ENCODE measurements at regions of chr7 and their contacts with region 1.

Region 1: DNA sequence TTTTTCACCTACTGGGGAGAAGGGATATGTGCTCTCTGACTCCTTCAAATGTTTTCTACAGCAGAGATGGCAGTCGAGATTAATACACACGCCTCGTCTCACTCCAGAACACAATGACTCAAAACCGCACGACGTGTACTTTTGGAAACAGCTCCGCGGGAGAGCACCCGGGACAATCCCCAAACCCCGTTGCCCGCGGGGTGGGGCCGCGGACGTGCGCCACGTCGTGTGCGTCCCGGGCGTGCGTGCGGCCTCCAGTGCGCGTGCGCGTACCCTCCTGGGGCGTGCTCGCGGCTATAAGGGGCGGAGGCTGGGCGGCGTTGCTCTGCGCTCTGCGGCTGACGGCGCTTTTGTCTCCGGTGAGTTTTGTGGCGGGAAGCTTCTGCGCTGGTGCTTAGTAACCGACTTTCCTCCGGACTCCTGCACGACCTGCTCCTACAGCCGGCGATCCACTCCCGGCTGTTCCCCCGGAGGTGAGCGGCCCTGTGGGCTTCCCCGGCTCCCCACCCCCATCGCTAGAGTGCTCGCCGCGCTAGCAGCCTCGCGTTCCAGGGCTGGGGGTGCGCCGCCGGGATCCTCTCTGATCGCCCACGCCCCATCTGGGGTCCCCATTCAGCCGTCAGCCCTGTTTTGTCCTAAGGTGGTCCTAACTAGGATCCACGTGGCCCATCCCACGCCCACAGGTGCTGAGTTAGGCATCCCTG is at the start of gene HILPDA:
- DNase-seq: peak; percentile 90 to 98 (median 93)
- ATAC-seq: peak; percentile 95
- H3K4me3 ChIP-seq: peak within 1 kb of the TSS; percentile 85
- H3K4me3 Mint-ChIP-seq: peak within 1 kb of the TSS; percentile 81 to 96 (median 92)
- H3K27ac ChIP-seq: peak within 1 kb of the TSS; percentile 83
- H3K27ac Mint-ChIP-seq: peak within 1 kb of the TSS; percentile 72 to 98 (median 89)
- H3K4me1 ChIP-seq: peaks cover 12 to 22% of the 10 kb centered on the region in 2 donors
- H3K4me1 Mint-ChIP-seq: peaks cover 13 to 65% (median 22%) of the 10 kb centered on the region in 7 donors
- H3K27me3 ChIP-seq: no peaks in the 10 kb centered on the region
- H3K27me3 Mint-ChIP-seq: peaks cover 0 to 8% (median 0%) of the 10 kb centered on the region in 5 donors
- total RNA-seq, gene HILPDA: 2.4 to 39.5 (median 4.4) TPM

Region 2: DNA sequence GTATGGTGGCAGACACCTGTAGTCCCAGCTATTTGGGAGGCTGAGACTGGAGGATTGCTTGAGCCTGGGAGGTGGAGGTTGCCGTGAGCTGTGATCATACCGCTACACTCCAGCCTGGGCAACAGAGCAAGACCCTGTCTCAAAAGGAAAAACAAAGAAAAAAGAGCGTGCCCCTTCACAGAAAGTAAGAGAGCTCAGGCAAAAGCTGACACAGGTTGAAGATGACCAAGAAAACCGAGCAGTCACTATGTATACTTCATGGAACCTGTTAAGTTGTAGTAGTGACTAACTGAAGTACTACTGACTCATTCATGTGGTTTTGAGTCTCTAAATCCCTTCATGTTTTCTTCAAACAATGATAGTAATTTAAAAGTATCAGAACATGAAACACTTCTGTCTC is 93.0 kb before region 1 on chr7:
- CTCF ChIA-PET with region 1: no interaction called
- POLR2A ChIA-PET with region 1: no interaction called
- intact Hi-C with region 1: no loop called
- DNase-seq: no peak
- ATAC-seq: no peak
- H3K4me3 ChIP-seq: no peak overlapping the region
- H3K4me3 Mint-ChIP-seq: peak overlapping the region; percentile 34 to 96 (median 87)
- H3K27ac ChIP-seq: no peak overlapping the region
- H3K27ac Mint-ChIP-seq: peak overlapping the region in 3 of 9 donors; percentile 29 to 76 (median 41)
- H3K4me1 ChIP-seq: peaks cover 0 to 5% of the 10 kb centered on the region in 2 donors
- H3K4me1 Mint-ChIP-seq: peaks cover 11 to 21% (median 15%) of the 10 kb centered on the region in 7 donors
- H3K27me3 ChIP-seq: no peaks in the 10 kb centered on the region
- H3K27me3 Mint-ChIP-seq: peaks cover 43 to 89% (median 48%) of the 10 kb centered on the region in 5 donors

Region 3: DNA sequence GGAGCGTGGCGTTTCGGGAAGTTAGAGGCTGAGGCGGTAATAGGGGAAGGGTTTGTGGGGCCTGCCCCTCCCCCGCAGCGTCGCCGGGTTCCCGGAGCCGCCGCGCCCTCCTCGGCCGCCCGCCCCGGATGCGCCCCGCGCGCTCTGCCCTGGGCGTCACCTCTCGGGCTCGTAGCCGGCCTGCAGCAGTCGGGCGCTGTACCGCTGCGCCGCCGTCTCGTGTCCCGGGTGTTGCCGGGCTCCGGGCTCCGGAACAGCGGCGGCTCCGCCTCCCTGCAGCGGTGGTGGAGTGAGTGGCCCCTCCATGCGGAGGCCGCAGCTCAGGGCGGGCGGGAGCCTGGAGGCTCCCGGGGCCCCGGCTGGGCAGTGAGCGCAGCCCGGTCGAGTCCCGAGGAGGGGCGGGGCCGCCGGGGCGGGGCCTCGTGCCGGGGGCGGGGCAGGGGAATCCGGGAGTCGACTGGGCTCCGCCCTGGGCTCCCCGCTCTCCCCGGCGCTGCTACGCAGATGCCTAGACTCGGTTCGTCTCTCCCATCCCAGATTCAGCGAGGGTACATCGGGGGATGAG is 46.0 kb before region 1 on chr7 and contains the start of gene IMPDH1:
- CTCF ChIA-PET with region 1: interaction called, 4 read pairs
- POLR2A ChIA-PET with region 1: interaction called, 4 read pairs
- intact Hi-C with region 1: loop called (anchors 1 kb)
- DNase-seq: peak; percentile 73 to 95 (median 83)
- ATAC-seq: peak; percentile 87
- H3K4me3 ChIP-seq: peak within 1 kb of the TSS; percentile 89
- H3K4me3 Mint-ChIP-seq: peak within 1 kb of the TSS; percentile 88 to 95 (median 92)
- H3K27ac ChIP-seq: peak within 1 kb of the TSS; percentile 81
- H3K27ac Mint-ChIP-seq: peak within 1 kb of the TSS; percentile 87 to 93 (median 90)
- H3K4me1 ChIP-seq: peaks cover 15 to 27% of the 10 kb centered on the region in 2 donors
- H3K4me1 Mint-ChIP-seq: peaks cover 12 to 41% (median 38%) of the 10 kb centered on the region in 7 donors
- H3K27me3 ChIP-seq: no peaks in the 10 kb centered on the region
- H3K27me3 Mint-ChIP-seq: peaks cover 0 to 26% (median 0%) of the 10 kb centered on the region in 5 donors
- total RNA-seq, gene IMPDH1: 36.5 to 92.0 (median 44.4) TPM

Measured in naive thymus-derived CD4-positive, alpha-beta T cell (primary cell).